ENCODE measurements at regions of chr2 and their contacts with region 1.

Region 1: DNA sequence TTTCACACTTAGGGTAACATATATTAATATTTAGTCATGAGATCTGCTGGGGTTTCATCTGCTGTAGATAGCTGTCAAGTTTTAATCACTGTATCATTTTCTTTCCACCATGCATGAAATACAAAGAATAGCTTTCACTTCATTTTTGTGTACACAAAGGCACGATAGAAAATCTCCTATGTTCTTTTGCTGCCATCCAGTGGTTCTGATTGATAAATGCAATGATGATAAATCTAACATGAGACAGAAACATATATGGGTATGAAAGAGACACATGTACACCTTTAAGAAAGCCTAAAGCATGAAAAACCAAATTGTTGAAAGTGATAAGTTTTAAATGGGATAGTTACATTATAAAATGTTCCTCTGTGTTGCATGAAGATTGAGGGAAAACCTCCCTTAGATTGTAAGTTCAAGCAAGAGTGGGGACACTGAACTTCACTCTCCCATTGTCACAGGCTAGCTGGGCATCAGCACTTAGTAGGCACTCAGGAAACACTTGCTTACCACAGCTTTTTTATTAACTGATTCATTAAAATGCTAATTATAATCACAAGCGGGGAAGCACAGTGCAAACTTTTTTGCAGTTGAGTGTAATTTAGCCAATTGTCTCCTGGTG is 31.2 kb downstream of the C1D start:
- DNase-seq: peak; percentile 64
- ATAC-seq: peak; percentile 83
- H3K4me3 ChIP-seq: no peak overlapping the region
- H3K27ac ChIP-seq: no peak overlapping the region
- H3K4me1 ChIP-seq: no peaks in the 10 kb centered on the region
- H3K27me3 ChIP-seq: no peaks in the 10 kb centered on the region
- CTCF ChIP-seq: peak; percentile 84
- EP300 ChIP-seq: no peak
- POLR2A ChIP-seq: no peak
- RAD21 ChIP-seq: peak; percentile 74

Region 2: DNA sequence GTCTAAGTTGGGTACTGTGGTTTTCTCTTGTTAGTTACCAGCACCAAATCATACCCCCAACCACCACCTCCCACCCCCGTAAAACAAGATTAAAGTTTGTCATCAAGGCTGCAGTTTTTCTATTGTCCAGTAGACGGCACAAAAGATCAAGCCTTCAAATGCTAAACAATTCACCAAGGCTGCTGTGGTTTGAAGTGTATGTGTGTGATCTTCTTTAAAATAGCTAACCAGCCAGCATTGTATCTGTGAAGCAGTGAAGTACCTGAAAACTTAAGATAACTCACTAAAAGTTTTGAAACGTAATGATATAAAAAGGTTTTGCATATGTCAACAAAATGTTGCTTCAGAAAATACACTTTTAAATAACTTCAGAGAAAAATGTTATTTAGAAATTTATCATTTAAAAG is 1602.6 kb before region 1 on chr2:
- CTCF ChIA-PET with region 1: no interaction called
- POLR2A ChIA-PET with region 1: no interaction called
- in situ Hi-C with region 1: loop called (anchors 25 kb)
- intact Hi-C with region 1: loop called (anchors 1 kb)
- DNase-seq: peak; percentile 61
- ATAC-seq: no peak
- H3K4me3 ChIP-seq: no peak overlapping the region
- H3K27ac ChIP-seq: no peak overlapping the region
- H3K4me1 ChIP-seq: peaks cover 22% of the 10 kb centered on the region
- H3K27me3 ChIP-seq: peaks cover 5 to 36% of the 10 kb centered on the region in 2 experiments
- CTCF ChIP-seq: peak; percentile 87
- EP300 ChIP-seq: no peak
- POLR2A ChIP-seq: no peak
- RAD21 ChIP-seq: peak; percentile 59; the same call in 1 of the 2 replicates

Region 3: GRCh38 chr2:66587216-66587615 is 1444.4 kb before region 1 on chr2:
- CTCF ChIA-PET with region 1: no interaction called
- POLR2A ChIA-PET with region 1: no interaction called
- in situ Hi-C with region 1: no loop called
- intact Hi-C with region 1: loop called (anchors 10 kb)
- DNase-seq: peak; percentile 52
- ATAC-seq: peak; percentile 97
- H3K4me3 ChIP-seq: no peak overlapping the region
- H3K27ac ChIP-seq: no peak overlapping the region
- H3K4me1 ChIP-seq: no peaks in the 10 kb centered on the region
- H3K27me3 ChIP-seq: peaks cover 1 to 16% of the 10 kb centered on the region in 2 experiments; a peak in 3 of 5 replicates
- CTCF ChIP-seq: peak; percentile 77
- EP300 ChIP-seq: no peak
- POLR2A ChIP-seq: no peak
- RAD21 ChIP-seq: peak; percentile 69

Region 4: DNA sequence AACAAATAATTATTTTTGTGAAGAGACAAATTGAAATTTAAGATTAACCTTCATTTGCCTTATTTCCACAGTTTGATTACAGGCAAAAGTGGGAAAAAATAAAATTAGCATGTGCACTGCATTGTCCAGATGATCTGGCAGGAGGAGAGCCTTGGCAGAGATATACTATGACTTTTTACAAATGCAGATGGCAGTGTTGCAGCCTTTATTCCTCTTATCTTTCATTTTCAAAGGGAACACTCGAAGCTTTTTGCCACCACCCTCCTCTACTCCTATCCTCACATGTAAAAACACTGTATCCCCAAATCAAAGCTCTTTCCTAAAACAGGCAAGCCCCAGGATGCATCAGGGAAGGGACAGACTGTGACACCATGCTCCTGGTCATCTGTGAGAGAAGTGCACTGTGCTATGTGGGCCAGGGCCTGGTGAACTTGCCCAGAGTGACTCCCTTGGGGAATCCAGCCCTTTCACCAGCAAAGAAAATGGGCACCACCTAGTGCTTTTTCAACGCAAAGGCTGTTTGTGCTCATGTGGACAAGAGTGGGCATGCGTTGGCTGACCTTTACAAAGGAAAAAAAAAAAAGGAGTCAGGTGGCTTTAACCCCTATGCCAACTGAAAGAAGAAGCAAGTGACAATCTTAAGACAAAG is 709.2 kb before region 1 on chr2:
- CTCF ChIA-PET with region 1: no interaction called
- POLR2A ChIA-PET with region 1: no interaction called
- in situ Hi-C with region 1: no loop called
- intact Hi-C with region 1: loop called (anchors 5 kb)
- DNase-seq: peak; percentile 65
- ATAC-seq: peak; percentile 100
- H3K4me3 ChIP-seq: no peak overlapping the region
- H3K27ac ChIP-seq: no peak overlapping the region
- H3K4me1 ChIP-seq: no peaks in the 10 kb centered on the region
- H3K27me3 ChIP-seq: no peaks in the 10 kb centered on the region
- CTCF ChIP-seq: peak; percentile 83
- EP300 ChIP-seq: no peak
- POLR2A ChIP-seq: no peak
- RAD21 ChIP-seq: peak; percentile 75

Region 5: DNA sequence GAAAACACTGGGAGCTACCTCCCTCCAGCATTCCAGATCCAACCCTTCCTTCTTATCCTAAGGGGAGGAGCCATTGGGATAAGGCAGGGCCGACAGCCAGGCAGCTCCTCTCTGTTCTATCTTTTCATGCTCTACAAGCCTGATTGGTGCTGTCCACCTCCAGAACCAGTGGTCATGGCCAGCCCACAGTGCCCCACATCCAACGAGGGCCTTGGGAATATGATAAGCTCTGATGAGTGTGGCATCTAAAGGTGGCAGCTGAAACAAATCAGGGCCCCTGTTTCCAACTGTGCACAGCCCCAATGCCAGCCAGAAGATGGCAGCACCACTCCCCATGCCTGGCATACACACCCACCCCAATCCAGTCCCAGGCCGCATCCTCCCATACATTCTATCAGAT is 298.1 kb before region 1 on chr2:
- CTCF ChIA-PET with region 1: interaction called, 3 read pairs
- POLR2A ChIA-PET with region 1: no interaction called
- in situ Hi-C with region 1: no loop called
- intact Hi-C with region 1: loop called (anchors 1 kb)
- DNase-seq: peak; percentile 8
- ATAC-seq: peak; percentile 87
- H3K4me3 ChIP-seq: no peak overlapping the region
- H3K27ac ChIP-seq: no peak overlapping the region
- H3K4me1 ChIP-seq: peaks cover 28% of the 10 kb centered on the region
- H3K27me3 ChIP-seq: no peaks in the 10 kb centered on the region
- CTCF ChIP-seq: peak; percentile 43
- EP300 ChIP-seq: no peak
- POLR2A ChIP-seq: no peak
- RAD21 ChIP-seq: no peak

Region 6: GRCh38 chr2:68295516-68295915 is 263.9 kb after region 1 on chr2:
- CTCF ChIA-PET with region 1: no interaction called
- POLR2A ChIA-PET with region 1: no interaction called
- in situ Hi-C with region 1: no loop called
- intact Hi-C with region 1: loop called (anchors 10 kb)
- DNase-seq: no peak
- ATAC-seq: no peak
- H3K4me3 ChIP-seq: no peak overlapping the region
- H3K27ac ChIP-seq: no peak overlapping the region
- H3K4me1 ChIP-seq: no peaks in the 10 kb centered on the region
- H3K27me3 ChIP-seq: no peaks in the 10 kb centered on the region; a peak in 1 of 5 replicates
- CTCF ChIP-seq: no peak
- EP300 ChIP-seq: no peak
- POLR2A ChIP-seq: no peak
- RAD21 ChIP-seq: no peak

Measured in HepG2 (cell line).